Activated CD4-positive, alpha-beta memory T cell treated with anti-CD3 and anti-CD28 coated beads for 36 hours (primary cell): ENCODE measurements at regions of chr17 and their contacts with region 1.

Region 1: DNA sequence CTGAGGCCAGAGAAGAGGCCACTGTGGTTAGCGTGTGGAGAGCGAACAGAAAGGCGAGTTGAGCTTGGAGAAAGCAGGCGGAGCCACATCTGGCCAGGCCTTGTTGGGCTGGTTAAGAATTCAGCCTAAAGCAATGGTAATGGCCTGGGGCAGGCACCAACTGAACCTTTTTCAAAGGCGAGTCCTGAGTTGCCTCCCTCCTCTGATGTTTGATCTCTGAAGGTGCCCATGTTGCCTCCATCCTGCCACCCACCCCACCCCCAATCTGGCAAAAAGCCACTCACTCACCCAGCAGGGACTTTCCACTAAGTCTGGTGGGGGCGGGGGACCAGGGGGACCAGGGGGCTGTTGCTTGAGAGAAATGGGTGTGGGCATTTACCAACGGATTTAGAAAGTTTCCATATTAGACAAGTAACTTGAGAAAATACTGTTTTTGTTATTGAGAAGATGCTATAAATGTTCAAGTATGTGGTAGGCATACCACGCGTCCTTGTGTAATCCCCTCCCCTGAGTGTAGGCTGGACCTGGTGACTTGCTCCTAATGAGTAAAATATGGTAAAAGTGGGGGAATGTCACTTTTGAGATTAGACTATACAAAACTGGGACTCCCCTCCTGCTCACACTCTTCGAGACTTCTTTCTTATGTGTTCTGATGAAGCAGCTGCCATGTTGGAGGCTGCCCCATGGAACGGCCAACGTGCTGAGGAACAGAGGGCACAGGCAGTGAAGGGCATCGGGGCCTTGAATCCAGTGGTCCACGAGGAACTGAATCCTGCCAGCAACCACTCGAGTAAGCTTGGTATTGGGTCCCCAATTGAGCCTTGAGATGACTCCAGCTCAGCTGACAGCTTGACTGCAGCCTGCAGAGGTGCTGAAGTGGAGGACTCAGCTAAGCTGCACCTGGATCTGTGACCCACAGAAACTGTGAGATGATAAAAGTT is 29.9 kb upstream of the TNS4 start:
- DNase-seq: peak; percentile 94
- H3K4me3 Mint-ChIP-seq: peak overlapping the region; percentile 75
- H3K27ac Mint-ChIP-seq: peak overlapping the region; percentile 94
- H3K4me1 Mint-ChIP-seq: peaks cover 67% of the 10 kb centered on the region
- H3K27me3 Mint-ChIP-seq: no peaks in the 10 kb centered on the region

Region 2: GRCh38 chr17:40362696-40363110 is 168.6 kb before region 1 on chr17:
- CTCF ChIA-PET with region 1: interaction called, 120 read pairs
- POLR2A ChIA-PET with region 1: interaction called, 10 read pairs
- intact Hi-C with region 1: loop called (anchors 1 kb)
- DNase-seq: peak; percentile 93
- H3K4me3 Mint-ChIP-seq: peak overlapping the region; percentile 42
- H3K27ac Mint-ChIP-seq: no peak overlapping the region
- H3K4me1 Mint-ChIP-seq: peaks cover 10% of the 10 kb centered on the region
- H3K27me3 Mint-ChIP-seq: peaks cover 14% of the 10 kb centered on the region

Region 3: DNA sequence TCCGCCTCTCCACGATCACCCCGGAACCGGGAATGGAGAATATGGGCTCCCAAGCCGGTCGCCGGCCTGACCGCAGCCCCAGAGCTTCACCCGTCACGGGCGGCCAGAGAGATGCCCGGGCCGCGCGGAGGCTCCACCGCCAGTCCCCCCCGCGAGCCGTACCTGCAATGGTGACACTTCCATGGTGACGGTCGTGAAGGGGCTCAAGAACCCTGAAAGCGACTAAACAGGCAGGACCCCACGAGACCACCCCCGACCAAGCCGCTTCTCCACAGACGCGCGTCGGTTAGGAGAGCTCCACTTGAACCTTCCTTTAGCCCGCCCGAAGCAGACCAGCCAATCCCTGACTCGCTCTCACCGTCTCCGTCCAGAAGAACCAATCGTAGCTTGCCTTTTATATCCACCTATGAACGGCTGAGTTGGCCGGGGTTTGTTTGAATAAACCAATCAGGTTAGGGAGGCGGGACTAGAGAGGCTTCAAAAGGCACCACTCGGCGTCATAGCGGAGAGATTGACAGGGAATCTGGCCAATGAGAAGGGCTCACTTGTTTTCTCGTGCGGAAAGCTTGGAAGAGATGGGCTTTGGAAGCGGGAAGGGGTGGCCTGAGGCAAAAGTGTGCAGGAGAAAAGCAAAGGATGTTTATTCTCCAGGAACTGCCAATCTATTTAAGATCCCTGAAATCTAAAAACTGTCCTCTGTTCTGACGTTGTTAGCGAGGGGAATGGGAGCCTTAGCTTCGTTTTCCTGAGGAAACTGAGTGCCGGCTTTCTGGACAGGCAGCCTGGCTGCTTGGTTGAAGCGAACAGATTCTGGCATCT is 113.5 kb before region 1 on chr17 and contains the start of gene TOP2A:
- CTCF ChIA-PET with region 1: interaction called, 99 read pairs
- POLR2A ChIA-PET with region 1: interaction called, 16 read pairs
- intact Hi-C with region 1: loop called (anchors 1 kb)
- DNase-seq: peak; percentile 98
- H3K4me3 Mint-ChIP-seq: peak within 1 kb of the TSS; percentile 99
- H3K27ac Mint-ChIP-seq: peak within 1 kb of the TSS; percentile 89
- H3K4me1 Mint-ChIP-seq: peaks cover 30% of the 10 kb centered on the region
- H3K27me3 Mint-ChIP-seq: no peaks in the 10 kb centered on the region
- total RNA-seq, gene TOP2A: 301 to 311 TPM

Region 4: GRCh38 chr17:40450175-40450574 is 81.1 kb before region 1 on chr17:
- CTCF ChIA-PET with region 1: interaction called, 129 read pairs
- POLR2A ChIA-PET with region 1: no interaction called
- intact Hi-C with region 1: loop called (anchors 1 kb)
- DNase-seq: peak; percentile 55
- H3K4me3 Mint-ChIP-seq: no peak overlapping the region
- H3K27ac Mint-ChIP-seq: no peak overlapping the region
- H3K4me1 Mint-ChIP-seq: peaks cover 32% of the 10 kb centered on the region
- H3K27me3 Mint-ChIP-seq: no peaks in the 10 kb centered on the region

Region 5: DNA sequence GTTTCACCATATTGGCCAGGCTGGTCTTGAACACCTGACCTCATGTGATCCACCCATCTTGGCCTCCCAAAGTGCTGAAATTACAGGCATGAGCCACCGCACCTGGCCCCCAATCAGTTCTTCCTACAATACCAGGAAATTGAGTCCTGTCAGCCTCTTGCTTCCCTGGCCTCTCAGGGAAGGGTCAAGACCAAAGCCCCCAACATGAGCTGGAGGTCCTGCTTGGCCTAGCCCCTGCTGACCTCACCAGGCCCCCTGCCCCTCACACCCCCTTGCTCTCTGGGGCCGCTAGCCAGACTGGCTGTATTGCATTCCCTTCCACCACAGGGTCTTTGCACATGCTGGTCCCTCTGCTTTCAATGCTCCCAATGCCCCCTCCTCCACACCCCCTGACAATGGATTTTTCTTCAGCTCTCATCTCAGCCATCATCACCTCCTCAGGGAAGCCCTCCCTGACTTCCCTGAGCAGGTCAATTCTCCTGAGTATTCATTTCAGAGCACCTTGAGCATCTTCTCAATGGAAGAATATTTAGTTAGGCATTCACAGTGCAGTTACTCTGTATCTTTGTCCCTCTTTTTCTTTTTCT is 63.9 kb before region 1 on chr17:
- CTCF ChIA-PET with region 1: no interaction called
- POLR2A ChIA-PET with region 1: no interaction called
- intact Hi-C with region 1: no loop called
- DNase-seq: no peak
- H3K4me3 Mint-ChIP-seq: no peak overlapping the region
- H3K27ac Mint-ChIP-seq: no peak overlapping the region
- H3K4me1 Mint-ChIP-seq: no peaks in the 10 kb centered on the region
- H3K27me3 Mint-ChIP-seq: no peaks in the 10 kb centered on the region

Region 6: DNA sequence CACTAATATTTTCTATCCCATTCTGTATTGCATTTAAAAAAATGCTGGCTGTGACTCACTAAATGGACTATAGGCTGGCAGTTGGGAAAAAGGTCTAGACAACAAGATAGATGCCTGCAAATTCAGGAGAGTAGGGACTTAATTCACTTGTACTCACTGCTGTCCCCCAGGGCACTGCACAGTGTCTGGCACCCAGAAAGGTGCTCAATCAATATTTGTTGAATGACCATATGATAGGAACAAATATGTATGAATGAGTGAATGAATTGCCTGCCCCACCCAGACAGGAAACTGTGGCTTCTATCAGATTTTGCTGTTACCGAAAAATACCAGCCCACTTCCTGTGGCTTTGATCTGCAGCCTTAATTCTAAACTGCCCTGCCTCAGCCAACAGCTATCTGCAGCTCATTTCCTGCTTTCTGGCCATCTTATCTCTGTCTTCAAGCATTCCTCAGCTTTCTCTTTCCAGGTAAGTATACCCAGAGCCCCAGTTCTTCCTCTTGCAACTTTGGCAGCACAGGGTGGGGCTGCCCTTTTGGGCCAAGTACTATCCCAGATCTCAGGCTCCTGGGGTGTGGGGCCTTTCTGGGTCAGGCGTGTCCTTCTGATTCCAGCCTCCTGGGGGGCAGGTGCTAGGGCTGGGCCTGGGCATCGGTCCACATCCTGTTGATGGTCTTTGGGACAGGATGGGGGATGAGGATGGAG is 14.6 kb before region 1 on chr17:
- CTCF ChIA-PET with region 1: interaction called, 37 read pairs
- POLR2A ChIA-PET with region 1: interaction called, 19 read pairs
- intact Hi-C with region 1: loop called (anchors 1 kb)
- DNase-seq: peak; percentile 83
- H3K4me3 Mint-ChIP-seq: peak overlapping the region; percentile 82
- H3K27ac Mint-ChIP-seq: peak overlapping the region; percentile 85
- H3K4me1 Mint-ChIP-seq: peaks cover 60% of the 10 kb centered on the region
- H3K27me3 Mint-ChIP-seq: no peaks in the 10 kb centered on the region

Region 7: DNA sequence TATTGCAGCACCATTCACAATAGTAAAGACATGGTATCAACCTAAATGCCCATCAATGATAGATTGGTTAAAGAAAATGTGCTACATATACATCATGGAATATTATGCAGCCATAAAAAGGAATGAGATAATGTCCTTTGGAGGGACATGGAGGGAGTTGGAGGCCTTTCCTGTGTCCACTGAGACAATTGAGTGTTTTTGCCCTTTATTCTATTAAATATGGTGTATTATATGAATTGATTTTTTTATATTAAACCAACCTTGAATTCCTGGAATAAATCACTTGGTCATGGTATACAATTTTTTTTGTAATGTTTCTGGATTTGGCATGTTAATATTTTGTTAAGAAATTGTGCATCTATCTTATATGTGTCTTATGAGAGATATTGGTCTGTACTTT is 43.0 kb after region 1 on chr17:
- CTCF ChIA-PET with region 1: no interaction called
- POLR2A ChIA-PET with region 1: no interaction called
- intact Hi-C with region 1: no loop called
- DNase-seq: no peak
- H3K4me3 Mint-ChIP-seq: no peak overlapping the region
- H3K27ac Mint-ChIP-seq: no peak overlapping the region
- H3K4me1 Mint-ChIP-seq: peaks cover 58% of the 10 kb centered on the region
- H3K27me3 Mint-ChIP-seq: no peaks in the 10 kb centered on the region